ENCODE measurements at regions of chr5 and their contacts with region 1.

Region 1: GRCh38 chr5:16378762-16379161 is 86.8 kb downstream of the ZNF622 start:
- DNase-seq: no peak
- ATAC-seq: peak; percentile 91

Region 2: GRCh38 chr5:16418471-16418922 is 39.7 kb after region 1 on chr5:
- intact Hi-C with region 1: loop called (anchors 1 kb)
- DNase-seq: no peak
- ATAC-seq: peak; percentile 96